MCF 10A (cell line): ENCODE measurements at regions of chr14 and their contacts with region 1.

Region 1: GRCh38 chr14:60091550-60092530 is at the start of gene PCNX4:
- DNase-seq: peak; percentile 99
- H3K4me3 Mint-ChIP-seq: peak within 1 kb of the TSS; percentile 93
- H3K27ac Mint-ChIP-seq: peak within 1 kb of the TSS; percentile 97
- H3K4me1 Mint-ChIP-seq: peaks cover 26% of the 10 kb centered on the region
- H3K27me3 Mint-ChIP-seq: no peaks in the 10 kb centered on the region
- CTCF ChIP-seq: no peak
- total RNA-seq, gene PCNX4: 62.8 and 63.3 TPM in 2 replicates

Region 2: DNA sequence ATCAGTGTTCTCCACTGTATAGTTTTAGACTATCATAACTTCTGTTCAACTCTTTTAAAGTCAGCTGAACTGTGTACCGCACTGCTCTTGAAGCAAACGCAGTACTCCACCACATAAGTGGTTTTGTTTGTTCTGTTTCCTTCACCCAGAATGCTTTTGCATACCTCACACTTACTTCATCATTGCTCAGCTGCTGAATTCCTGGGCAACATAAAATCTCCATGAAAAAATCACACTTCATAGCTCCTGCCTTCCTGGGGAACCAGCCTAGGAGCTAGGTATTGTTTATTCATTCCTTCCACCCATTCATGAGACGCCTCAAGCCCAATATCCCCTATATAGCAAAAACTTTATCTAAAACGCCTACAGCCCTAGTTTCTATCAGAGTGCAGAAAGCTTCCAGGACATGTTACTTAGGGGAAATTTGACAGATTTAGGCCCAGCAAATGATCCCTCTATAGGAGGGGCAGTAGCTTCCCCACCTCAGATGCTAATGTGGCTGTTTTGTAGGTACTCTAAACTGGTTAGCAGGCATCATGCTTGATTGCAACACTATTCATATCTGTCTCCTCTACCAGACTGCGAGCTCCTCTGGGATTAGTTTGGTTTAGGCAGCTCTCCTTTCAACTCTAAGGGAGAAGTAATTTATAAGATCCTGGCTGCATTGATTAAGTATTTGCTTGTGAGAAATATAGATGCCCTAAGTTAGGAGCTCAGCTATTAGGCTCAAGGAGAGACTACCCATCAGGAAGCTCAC is 127.4 kb before region 1 on chr14:
- CTCF ChIA-PET with region 1: interaction called, 4 read pairs
- POLR2A ChIA-PET with region 1: interaction called, 8 read pairs
- intact Hi-C with region 1: loop called (anchors 2 kb)
- DNase-seq: peak; percentile 3
- H3K4me3 Mint-ChIP-seq: peak overlapping the region; percentile 83
- H3K27ac Mint-ChIP-seq: no peak overlapping the region
- H3K4me1 Mint-ChIP-seq: peaks cover 18% of the 10 kb centered on the region
- H3K27me3 Mint-ChIP-seq: no peaks in the 10 kb centered on the region
- CTCF ChIP-seq: no peak

Region 3: GRCh38 chr14:60008042-60008441 is 83.8 kb before region 1 on chr14:
- CTCF ChIA-PET with region 1: no interaction called
- POLR2A ChIA-PET with region 1: no interaction called
- intact Hi-C with region 1: no loop called
- DNase-seq: no peak
- H3K4me3 Mint-ChIP-seq: no peak overlapping the region
- H3K27ac Mint-ChIP-seq: no peak overlapping the region
- H3K4me1 Mint-ChIP-seq: no peaks in the 10 kb centered on the region
- H3K27me3 Mint-ChIP-seq: no peaks in the 10 kb centered on the region
- CTCF ChIP-seq: no peak

Region 4: DNA sequence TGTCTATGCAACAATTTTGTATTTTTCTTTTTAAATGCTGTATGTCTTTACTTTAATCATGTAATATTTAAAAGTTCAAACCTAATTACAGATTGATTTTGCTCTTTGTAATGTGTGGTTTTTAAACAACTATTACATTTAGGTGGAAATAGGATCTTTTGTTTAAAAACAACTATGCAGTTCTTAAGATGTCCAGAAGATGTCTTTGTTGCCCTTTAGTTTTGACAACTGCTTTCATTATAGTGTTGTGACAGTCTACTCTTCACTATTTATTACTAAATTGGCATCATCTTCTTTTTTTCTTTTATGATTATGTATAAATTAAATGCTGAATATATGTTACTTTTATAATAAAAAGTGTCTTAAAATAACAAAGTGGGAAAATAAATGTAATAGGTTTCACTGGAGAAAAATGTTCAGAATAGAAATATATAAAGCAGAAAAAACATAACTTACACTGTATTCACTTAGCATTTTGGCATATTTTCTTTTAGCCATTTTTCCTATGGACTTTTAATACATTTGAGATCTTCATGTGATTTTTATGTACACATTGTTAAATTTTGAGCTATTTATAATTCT is 27.3 kb before region 1 on chr14:
- CTCF ChIA-PET with region 1: interaction called, 7 read pairs
- POLR2A ChIA-PET with region 1: interaction called, 13 read pairs
- intact Hi-C with region 1: no loop called
- DNase-seq: peak; percentile 44
- H3K4me3 Mint-ChIP-seq: no peak overlapping the region
- H3K27ac Mint-ChIP-seq: no peak overlapping the region
- H3K4me1 Mint-ChIP-seq: peaks cover 8% of the 10 kb centered on the region
- H3K27me3 Mint-ChIP-seq: no peaks in the 10 kb centered on the region
- CTCF ChIP-seq: peak; percentile 53

Region 5: DNA sequence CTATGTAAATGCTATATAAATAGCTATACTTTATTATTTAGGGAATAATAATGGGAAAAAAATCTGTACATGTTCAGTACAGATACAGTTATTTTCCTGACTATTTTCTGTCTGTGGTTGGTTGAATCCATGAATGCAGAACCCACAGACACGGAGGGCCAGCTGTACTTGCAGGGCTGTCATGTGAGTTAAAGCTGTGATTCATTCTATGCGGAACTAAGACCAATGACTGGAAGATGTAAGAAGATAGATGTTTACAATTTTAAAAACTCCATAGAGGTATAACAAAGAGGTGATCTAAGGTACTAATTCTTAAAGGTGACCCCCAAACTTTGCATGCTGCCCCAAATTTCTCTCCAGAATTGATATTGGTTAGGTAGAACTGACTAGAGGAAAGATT is 14.5 kb after region 1 on chr14:
- CTCF ChIA-PET with region 1: interaction called, 3 read pairs
- POLR2A ChIA-PET with region 1: interaction called, 21 read pairs
- intact Hi-C with region 1: no loop called
- DNase-seq: no peak
- H3K4me3 Mint-ChIP-seq: no peak overlapping the region
- H3K27ac Mint-ChIP-seq: peak overlapping the region; percentile 40
- H3K4me1 Mint-ChIP-seq: peaks cover 34% of the 10 kb centered on the region
- H3K27me3 Mint-ChIP-seq: no peaks in the 10 kb centered on the region
- CTCF ChIP-seq: no peak

Region 6: DNA sequence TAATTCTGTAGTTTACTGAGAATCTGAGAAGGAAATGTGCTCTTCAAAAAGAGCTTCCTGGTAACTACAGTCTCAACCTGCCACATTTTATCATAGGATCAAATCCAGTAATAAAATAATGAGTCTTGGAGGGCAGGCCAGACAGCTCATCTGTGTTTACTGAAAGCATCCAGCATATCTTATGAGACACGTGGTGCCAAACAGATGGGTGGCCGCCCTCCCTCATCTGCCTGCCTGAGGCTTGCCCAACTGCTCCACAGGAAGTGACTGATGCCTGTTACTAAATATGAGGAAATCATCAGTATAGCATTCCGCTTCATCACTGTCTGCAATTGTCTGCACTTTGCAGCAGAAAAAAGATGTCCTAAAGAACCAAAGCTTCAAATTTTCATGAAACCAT is 59.9 kb after region 1 on chr14:
- CTCF ChIA-PET with region 1: interaction called, 4 read pairs
- POLR2A ChIA-PET with region 1: interaction called, 27 read pairs
- intact Hi-C with region 1: loop called (anchors 5 kb)
- DNase-seq: peak; percentile 90
- H3K4me3 Mint-ChIP-seq: no peak overlapping the region
- H3K27ac Mint-ChIP-seq: peak overlapping the region; percentile 89
- H3K4me1 Mint-ChIP-seq: peaks cover 10% of the 10 kb centered on the region
- H3K27me3 Mint-ChIP-seq: no peaks in the 10 kb centered on the region
- CTCF ChIP-seq: no peak

Region 7: DNA sequence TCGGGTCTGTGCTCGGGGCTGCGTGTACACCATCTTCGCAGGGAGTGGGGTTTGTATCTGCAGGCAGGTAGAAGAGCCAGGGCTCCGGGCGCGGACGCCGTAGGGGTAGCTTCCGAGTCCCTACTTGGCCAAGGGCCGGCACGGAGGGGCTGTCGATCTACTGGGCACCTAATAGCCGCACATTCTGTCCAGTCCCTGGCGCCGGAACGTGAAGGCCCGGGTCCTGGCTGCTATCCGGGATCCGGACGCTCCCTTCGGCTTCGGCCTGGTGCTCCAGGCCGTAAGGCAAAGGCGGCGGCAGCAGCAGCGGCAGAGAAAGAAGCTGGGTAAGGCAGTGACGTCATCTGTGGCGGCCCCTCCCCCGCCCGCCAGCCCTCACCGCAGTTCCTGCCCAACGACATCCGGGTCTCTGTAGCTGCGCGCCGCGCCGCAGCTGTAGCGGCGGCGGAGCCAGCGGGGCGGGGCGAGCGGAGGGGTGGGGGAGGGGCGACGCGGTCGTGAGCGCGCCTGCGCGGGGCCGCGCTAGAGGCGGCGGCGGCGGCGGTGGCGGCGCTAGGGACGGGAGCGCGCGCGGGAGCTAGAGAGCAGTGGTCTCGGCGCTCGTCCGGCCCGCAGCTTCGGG is 157.0 kb after region 1 on chr14 and contains the start of gene PPM1A:
- CTCF ChIA-PET with region 1: no interaction called
- POLR2A ChIA-PET with region 1: interaction called, 16 read pairs
- intact Hi-C with region 1: loop called (anchors 10 kb)
- DNase-seq: peak; percentile 89
- H3K4me3 Mint-ChIP-seq: peak within 1 kb of the TSS; percentile 98
- H3K27ac Mint-ChIP-seq: peak within 1 kb of the TSS; percentile 99
- H3K4me1 Mint-ChIP-seq: peaks cover 25% of the 10 kb centered on the region
- H3K27me3 Mint-ChIP-seq: no peaks in the 10 kb centered on the region
- CTCF ChIP-seq: no peak
- total RNA-seq, gene PPM1A: 47.2 and 50.4 TPM in 2 replicates